Heart left ventricle (tissue), 16 donors: ENCODE measurements at regions of chr12 and their contacts with region 1.

Region 1: DNA sequence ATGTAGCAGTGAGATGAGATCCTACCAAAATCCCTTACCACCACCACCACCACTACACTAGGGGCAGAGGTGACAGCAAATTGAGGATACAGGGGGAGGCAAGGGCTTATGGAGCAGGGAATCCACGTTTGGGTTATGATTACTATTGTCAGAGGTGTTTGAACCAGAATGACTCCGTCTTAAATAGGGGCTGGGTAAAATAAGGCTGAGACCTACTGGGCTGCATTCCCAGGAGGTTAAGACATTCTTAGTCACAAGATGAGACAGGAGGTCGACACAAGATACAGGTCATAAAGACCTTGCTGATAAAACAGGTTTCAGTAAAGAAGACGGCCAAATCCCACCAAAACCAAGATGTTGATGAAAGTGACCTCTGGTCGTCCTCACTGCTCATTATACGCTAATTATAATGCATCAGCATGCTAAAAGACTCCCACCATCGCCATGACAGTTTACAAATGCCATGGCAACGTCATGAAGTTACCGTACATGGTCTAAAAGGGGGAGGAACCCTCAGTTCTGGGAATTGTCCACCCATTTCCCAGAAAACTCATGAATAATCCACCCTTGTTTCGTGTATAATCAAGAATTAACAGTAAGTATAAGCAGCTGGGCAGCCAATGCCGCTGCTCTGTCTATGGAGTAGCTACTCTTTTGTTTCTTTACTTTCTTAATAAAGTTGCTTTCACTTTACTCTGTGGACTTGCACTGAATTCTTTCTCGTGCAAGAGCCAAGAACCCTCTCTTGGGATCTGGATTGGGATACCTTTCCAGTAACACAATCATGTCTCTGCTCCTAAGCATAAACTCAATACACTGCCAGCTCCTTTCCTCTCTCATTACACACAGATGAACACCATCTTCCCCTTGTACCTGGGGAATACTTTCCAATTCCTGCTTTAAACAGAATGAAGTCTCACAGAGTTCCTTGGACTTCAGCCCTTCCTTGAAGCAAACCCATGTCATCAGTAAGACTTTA is 16.7 kb upstream of the CRY1 start:
- DNase-seq: peak in 1 of 5 donors; percentile 31
- ATAC-seq: peak in 1 of 4 donors; percentile 38
- H3K4me3 ChIP-seq: peak overlapping the region in 3 of 12 donors; percentile 8 to 39 (median 30)
- H3K27ac ChIP-seq: peak overlapping the region in 1 of 12 donors; percentile 3
- H3K4me1 ChIP-seq: no peaks in the 10 kb centered on the region
- H3K27me3 ChIP-seq: no peaks in the 10 kb centered on the region
- CTCF ChIP-seq: no peak
- POLR2A ChIP-seq: no peak

Region 2: DNA sequence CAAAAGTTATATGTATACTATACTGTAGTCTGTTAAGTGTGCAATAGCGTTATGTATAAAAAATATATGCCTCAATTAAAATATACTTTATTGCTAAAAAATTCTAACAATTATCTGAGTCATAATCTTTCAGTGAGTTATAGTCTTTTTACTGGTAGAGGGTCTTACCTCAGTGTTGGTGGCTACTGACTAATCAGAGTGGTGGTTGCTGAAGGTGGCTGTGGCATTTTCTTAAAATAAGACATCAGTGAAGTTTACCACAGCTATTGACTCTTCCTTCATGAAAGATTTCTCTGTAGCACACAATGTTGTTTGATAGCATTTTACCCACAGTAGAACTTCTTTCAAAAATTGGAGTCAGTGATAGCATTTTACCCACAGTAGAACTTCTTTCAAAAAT is 729.1 kb before region 1 on chr12:
- intact Hi-C with region 1: loop called in 5 of 10 experiments (anchors 5 to 10 kb)
- DNase-seq: no peak
- ATAC-seq: no peak
- H3K4me3 ChIP-seq: no peak overlapping the region
- H3K27ac ChIP-seq: no peak overlapping the region
- H3K4me1 ChIP-seq: peaks cover 0 to under 1% (median 0%) of the 10 kb centered on the region in 12 donors
- H3K27me3 ChIP-seq: no peaks in the 10 kb centered on the region
- CTCF ChIP-seq: no peak
- POLR2A ChIP-seq: no peak

Region 3: GRCh38 chr12:106392759-106393158 is 717.3 kb before region 1 on chr12:
- intact Hi-C with region 1: loop called in 5 of 10 experiments (anchors 10 kb)
- DNase-seq: no peak
- ATAC-seq: no peak
- H3K4me3 ChIP-seq: no peak overlapping the region
- H3K27ac ChIP-seq: no peak overlapping the region
- H3K4me1 ChIP-seq: no peaks in the 10 kb centered on the region
- H3K27me3 ChIP-seq: no peaks in the 10 kb centered on the region
- CTCF ChIP-seq: no peak
- POLR2A ChIP-seq: no peak

Region 4: DNA sequence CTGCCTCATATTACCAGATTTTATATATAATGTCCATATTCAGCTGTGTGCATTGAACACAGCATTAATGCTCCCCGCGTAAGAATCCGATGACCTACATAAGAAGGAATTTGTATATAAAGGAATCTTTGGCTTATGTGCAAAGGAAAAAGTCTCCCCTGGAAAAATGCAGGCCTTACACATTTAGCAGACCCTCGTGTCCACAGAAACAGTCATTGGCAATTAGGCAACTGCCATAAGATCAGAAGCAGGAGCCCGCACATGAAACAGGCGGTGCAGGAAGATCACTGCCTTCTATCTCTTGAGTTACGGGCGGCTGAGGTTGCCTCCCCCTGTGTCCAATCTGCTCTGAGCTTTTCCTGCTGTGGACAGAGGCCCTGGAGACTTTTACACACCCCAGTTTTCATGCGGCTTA is 590.4 kb before region 1 on chr12:
- intact Hi-C with region 1: no loop called
- DNase-seq: no peak
- ATAC-seq: no peak
- H3K4me3 ChIP-seq: no peak overlapping the region
- H3K27ac ChIP-seq: no peak overlapping the region
- H3K4me1 ChIP-seq: no peaks in the 10 kb centered on the region
- H3K27me3 ChIP-seq: no peaks in the 10 kb centered on the region
- CTCF ChIP-seq: no peak
- POLR2A ChIP-seq: no peak